ENCODE measurements at regions of chr2 and their contacts with region 1.

Region 1: DNA sequence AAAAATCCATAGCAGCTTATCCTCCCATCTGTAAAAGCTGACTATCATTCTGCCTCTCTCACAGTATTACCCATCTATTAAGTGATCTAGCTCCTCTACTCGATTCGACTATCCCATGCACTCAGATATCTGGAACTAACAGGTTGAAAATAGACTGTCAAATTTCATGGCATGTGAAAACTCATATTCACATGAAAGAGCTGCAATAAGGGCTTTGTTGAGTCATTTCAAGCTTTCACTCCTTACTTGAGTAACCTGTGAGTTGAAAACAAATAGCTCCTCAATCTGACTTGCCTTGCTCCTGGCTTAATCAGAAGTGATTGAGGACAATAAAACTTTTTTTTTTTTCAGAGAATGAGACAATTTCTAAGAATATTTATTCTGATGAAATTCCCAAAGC is 192.4 kb upstream of the ERBB4 start:
- DNase-seq: no peak
- H3K4me3 Mint-ChIP-seq: no peak overlapping the region
- H3K27ac Mint-ChIP-seq: no peak overlapping the region
- H3K4me1 Mint-ChIP-seq: no peaks in the 10 kb centered on the region
- H3K27me3 Mint-ChIP-seq: peaks cover 2% of the 10 kb centered on the region

Region 2: GRCh38 chr2:213021971-213022899 is 291.2 kb after region 1 on chr2:
- CTCF ChIA-PET with region 1: no interaction called
- intact Hi-C with region 1: loop called (anchors 2 kb)
- DNase-seq: peak; percentile 8
- H3K4me3 Mint-ChIP-seq: no peak overlapping the region
- H3K27ac Mint-ChIP-seq: no peak overlapping the region
- H3K4me1 Mint-ChIP-seq: peaks cover 10% of the 10 kb centered on the region
- H3K27me3 Mint-ChIP-seq: peaks cover 6% of the 10 kb centered on the region